CD8-positive, alpha-beta memory T cell (primary cell): ENCODE measurements at regions of chrX and their contacts with region 1.

Region 1: DNA sequence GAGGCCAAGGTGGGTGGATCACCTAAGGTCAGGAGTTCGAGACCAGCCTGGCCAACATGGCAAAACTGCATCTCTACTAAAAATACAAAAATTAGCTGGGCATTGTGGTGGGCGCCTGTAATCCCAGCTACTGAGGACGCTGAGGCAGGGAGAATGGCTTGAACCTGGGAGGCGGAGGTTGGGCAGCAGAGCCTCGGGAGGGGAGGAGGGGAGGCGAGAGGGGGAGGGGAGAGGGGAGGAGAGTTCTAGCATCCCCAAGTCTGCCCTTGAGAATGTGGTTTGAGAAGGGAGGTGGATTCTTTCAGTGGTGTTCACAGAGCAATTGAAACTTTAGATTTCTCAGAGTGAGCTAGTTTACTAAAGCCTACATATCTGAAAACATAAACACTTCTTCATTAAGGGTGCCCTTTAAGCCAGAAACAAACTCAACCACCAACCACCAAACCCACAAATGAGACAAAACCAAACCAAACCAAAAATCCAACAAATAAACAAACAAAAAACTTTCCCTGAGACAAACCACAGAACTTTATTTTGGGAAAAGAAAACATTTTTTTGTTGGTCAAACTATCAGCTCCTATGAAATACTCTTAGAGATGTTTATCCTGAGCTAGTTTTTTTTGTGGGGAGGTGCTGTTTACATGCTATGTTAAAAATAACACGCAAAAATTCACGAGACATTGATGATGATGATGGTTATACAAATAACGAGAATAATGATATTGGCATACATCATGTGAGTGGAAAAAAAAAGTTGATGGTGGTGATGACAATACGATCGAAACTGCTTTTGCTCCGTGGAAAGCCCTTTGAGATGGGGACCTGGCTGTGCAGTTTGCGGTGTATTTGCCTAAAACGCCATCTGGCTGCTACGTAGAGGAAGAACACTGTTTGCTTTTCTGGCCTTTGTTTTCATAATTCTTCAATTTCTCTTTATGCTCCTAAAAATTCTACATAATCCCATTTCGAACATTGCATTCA is 98.2 kb upstream of the PRKX start:
- DNase-seq: peak; percentile 17 to 66 (median 53)
- H3K4me3 ChIP-seq: no peak overlapping the region
- H3K4me3 Mint-ChIP-seq: peak overlapping the region; percentile 54 to 86 (median 69)
- H3K27ac ChIP-seq: no peak overlapping the region
- H3K27ac Mint-ChIP-seq: peak overlapping the region; percentile 63 to 90 (median 82)
- H3K4me1 ChIP-seq: no peaks in the 10 kb centered on the region
- H3K4me1 Mint-ChIP-seq: peaks cover 17 to 28% (median 19%) of the 10 kb centered on the region in 3 donors
- H3K27me3 ChIP-seq: no peaks in the 10 kb centered on the region
- H3K27me3 Mint-ChIP-seq: peaks cover 19 to 22% of the 10 kb centered on the region in 2 donors

Region 2: GRCh38 chrX:3286196-3286945 is 525.2 kb before region 1 on chrX:
- CTCF ChIA-PET with region 1: no interaction called
- POLR2A ChIA-PET with region 1: no interaction called
- DNase-seq: no peak
- H3K4me3 ChIP-seq: no peak overlapping the region
- H3K4me3 Mint-ChIP-seq: no peak overlapping the region
- H3K27ac ChIP-seq: no peak overlapping the region
- H3K27ac Mint-ChIP-seq: no peak overlapping the region
- H3K4me1 ChIP-seq: no peaks in the 10 kb centered on the region
- H3K4me1 Mint-ChIP-seq: no peaks in the 10 kb centered on the region
- H3K27me3 ChIP-seq: no peaks in the 10 kb centered on the region
- H3K27me3 Mint-ChIP-seq: peaks cover 0 to 1% of the 10 kb centered on the region in 2 donors

Region 3: DNA sequence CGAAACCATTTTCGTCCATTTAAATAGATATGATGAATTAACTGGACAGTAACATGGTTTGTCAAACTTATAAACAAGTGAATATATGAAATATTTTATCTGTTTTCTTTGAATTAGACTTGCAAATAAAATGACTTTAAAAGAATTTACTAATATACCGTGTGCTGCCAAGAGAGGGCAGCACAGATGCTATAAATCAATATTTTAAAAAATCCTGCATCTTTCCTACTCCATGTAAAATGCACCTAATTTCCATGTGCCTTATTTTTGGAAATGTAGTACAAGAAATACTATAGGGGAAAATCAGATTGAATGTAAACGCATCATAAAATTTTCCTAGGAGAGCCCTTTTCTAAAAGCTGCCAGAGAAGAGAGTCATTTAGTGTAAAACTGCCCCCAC is 160.3 kb before region 1 on chrX:
- CTCF ChIA-PET with region 1: interaction called, 12 read pairs
- POLR2A ChIA-PET with region 1: interaction called, 3 read pairs
- DNase-seq: peak in 2 of 5 donors; percentile 12 to 31
- H3K4me3 ChIP-seq: no peak overlapping the region
- H3K4me3 Mint-ChIP-seq: no peak overlapping the region
- H3K27ac ChIP-seq: no peak overlapping the region
- H3K27ac Mint-ChIP-seq: peak overlapping the region in 2 of 8 donors; percentile 70
- H3K4me1 ChIP-seq: no peaks in the 10 kb centered on the region
- H3K4me1 Mint-ChIP-seq: peaks cover 0 to 10% (median 3%) of the 10 kb centered on the region in 3 donors
- H3K27me3 ChIP-seq: no peaks in the 10 kb centered on the region
- H3K27me3 Mint-ChIP-seq: no peaks in the 10 kb centered on the region

Region 4: DNA sequence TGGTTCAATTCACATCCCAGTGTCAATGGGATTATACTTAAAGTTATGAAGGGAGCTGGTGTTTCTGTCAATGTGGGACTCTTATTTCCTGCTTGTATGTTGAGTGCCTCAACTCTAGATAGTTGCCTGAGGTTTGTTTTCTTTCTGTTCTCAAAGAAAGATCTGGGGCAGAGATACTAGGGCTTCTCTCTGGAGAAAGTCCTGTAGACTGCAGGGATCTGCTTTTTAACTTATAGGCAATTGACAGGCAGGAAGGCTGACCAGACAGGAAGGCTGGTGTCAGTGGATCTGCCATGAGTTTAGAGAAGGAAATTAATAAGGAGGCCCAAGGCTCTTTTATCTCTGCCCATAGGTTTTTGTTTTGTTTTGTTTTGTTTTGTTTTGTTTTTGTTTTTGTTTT is 34.2 kb before region 1 on chrX:
- CTCF ChIA-PET with region 1: no interaction called
- POLR2A ChIA-PET with region 1: no interaction called
- DNase-seq: no peak
- H3K4me3 ChIP-seq: no peak overlapping the region
- H3K4me3 Mint-ChIP-seq: peak overlapping the region in 1 of 7 donors; percentile 43
- H3K27ac ChIP-seq: no peak overlapping the region
- H3K27ac Mint-ChIP-seq: peak overlapping the region in 4 of 8 donors; percentile 19 to 82 (median 39)
- H3K4me1 ChIP-seq: no peaks in the 10 kb centered on the region
- H3K4me1 Mint-ChIP-seq: peaks cover 12 to 20% (median 13%) of the 10 kb centered on the region in 3 donors
- H3K27me3 ChIP-seq: no peaks in the 10 kb centered on the region
- H3K27me3 Mint-ChIP-seq: peaks cover 0 to 4% of the 10 kb centered on the region in 2 donors